ENCODE measurements at regions of chr11 and their contacts with region 1.

Region 1: GRCh38 chr11:1728931-1729691 is 21.3 kb downstream of the IFITM10 start:
- DNase-seq: no peak
- ATAC-seq: no peak
- H3K4me3 ChIP-seq: no peak overlapping the region
- H3K27ac ChIP-seq: no peak overlapping the region
- H3K4me1 ChIP-seq: no peaks in the 10 kb centered on the region
- H3K27me3 ChIP-seq: peaks cover 41% of the 10 kb centered on the region
- CTCF ChIP-seq: no peak

Region 2: GRCh38 chr11:1749414-1750312 is 20.6 kb after region 1 on chr11:
- CTCF ChIA-PET with region 1: no interaction called
- POLR2A ChIA-PET with region 1: no interaction called
- intact Hi-C with region 1: no loop called
- DNase-seq: peak; percentile 45
- ATAC-seq: peak; percentile 57
- H3K4me3 ChIP-seq: no peak overlapping the region
- H3K27ac ChIP-seq: no peak overlapping the region
- H3K4me1 ChIP-seq: no peaks in the 10 kb centered on the region
- H3K27me3 ChIP-seq: peaks cover 7% of the 10 kb centered on the region; the same call in 1 of the 2 replicates
- CTCF ChIP-seq: no peak

Region 3: GRCh38 chr11:1796413-1797011 is 67.4 kb after region 1 on chr11:
- CTCF ChIA-PET with region 1: no interaction called
- POLR2A ChIA-PET with region 1: no interaction called
- intact Hi-C with region 1: loop called (anchors 10 kb)
- DNase-seq: no peak
- ATAC-seq: no peak
- H3K4me3 ChIP-seq: no peak overlapping the region
- H3K27ac ChIP-seq: no peak overlapping the region
- H3K4me1 ChIP-seq: no peaks in the 10 kb centered on the region
- H3K27me3 ChIP-seq: no peaks in the 10 kb centered on the region
- CTCF ChIP-seq: no peak